IMR-90 (cell line): ENCODE measurements at regions of chr4 and their contacts with region 1.

Region 1: GRCh38 chr4:86032476-86033022 is 327.3 kb downstream of the MAPK10 start:
- DNase-seq: peak; percentile 83
- ATAC-seq: peak; percentile 79
- H3K4me3 ChIP-seq: no peak overlapping the region
- H3K27ac ChIP-seq: peak overlapping the region; percentile 45
- H3K4me1 ChIP-seq: peaks cover 15% of the 10 kb centered on the region
- H3K27me3 ChIP-seq: no peaks in the 10 kb centered on the region
- CTCF ChIP-seq: no peak
- POLR2A ChIP-seq: no peak
- RAD21 ChIP-seq: no peak

Region 2: GRCh38 chr4:85642356-85643100 is 390.0 kb before region 1 on chr4:
- CTCF ChIA-PET with region 1: no interaction called
- POLR2A ChIA-PET with region 1: no interaction called
- dilution Hi-C with region 1: no loop called
- in situ Hi-C with region 1: no loop called
- intact Hi-C with region 1: no loop called
- DNase-seq: no peak
- ATAC-seq: no peak
- H3K4me3 ChIP-seq: no peak overlapping the region
- H3K27ac ChIP-seq: no peak overlapping the region
- H3K4me1 ChIP-seq: no peaks in the 10 kb centered on the region
- H3K27me3 ChIP-seq: no peaks in the 10 kb centered on the region
- CTCF ChIP-seq: no peak
- POLR2A ChIP-seq: no peak
- RAD21 ChIP-seq: no peak

Region 3: DNA sequence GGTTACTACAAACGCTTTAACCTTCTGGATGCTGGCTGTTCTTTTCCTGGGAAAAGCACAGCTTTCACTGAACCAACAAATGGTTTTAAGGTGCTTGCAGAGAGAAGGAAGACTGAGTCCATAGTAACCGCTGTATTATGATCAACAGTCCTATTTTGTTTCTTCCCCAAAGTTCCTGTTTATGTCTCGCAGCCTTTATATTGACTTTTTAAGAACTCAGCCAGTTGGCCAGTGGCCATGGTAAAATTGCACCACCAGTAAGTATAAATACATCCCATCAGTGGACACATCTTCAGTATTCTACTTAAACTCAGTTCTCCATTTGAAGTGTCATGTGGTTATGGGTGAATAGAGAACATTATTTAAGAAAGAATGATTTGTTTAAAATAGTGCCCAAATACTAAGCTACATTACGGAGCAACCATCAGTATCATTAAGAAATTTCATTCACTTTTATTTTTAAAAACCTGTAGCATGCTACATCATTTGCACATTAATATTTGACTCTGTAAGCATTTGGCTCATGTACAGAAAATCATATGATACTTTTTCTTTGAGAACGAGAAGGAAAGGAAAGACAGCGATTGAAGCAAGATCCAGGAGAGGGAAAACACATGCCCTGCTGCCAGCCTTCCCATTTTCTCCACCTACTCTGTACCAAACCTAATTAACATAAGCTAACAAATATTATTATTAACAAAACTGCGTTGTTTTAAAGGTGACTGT is 270.6 kb before region 1 on chr4:
- CTCF ChIA-PET with region 1: no interaction called
- POLR2A ChIA-PET with region 1: no interaction called
- dilution Hi-C with region 1: no loop called
- in situ Hi-C with region 1: loop called (anchors 10 kb)
- intact Hi-C with region 1: no loop called
- DNase-seq: peak; percentile 82
- ATAC-seq: peak; percentile 57
- H3K4me3 ChIP-seq: no peak overlapping the region
- H3K27ac ChIP-seq: peak overlapping the region; percentile 80; the same call in 1 of the 2 replicates
- H3K4me1 ChIP-seq: peaks cover 13% of the 10 kb centered on the region
- H3K27me3 ChIP-seq: no peaks in the 10 kb centered on the region
- CTCF ChIP-seq: no peak
- POLR2A ChIP-seq: no peak
- RAD21 ChIP-seq: no peak